ENCODE measurements at regions of chr14 and their contacts with region 1.

Region 1: GRCh38 chr14:75165586-75166391 is 10.6 kb downstream of the TMED10 start:
- DNase-seq: peak; percentile 20 to 89 (median 77)
- H3K4me3 ChIP-seq: peak overlapping the region in 33 of 59 donors; percentile 0 to 49 (median 19)
- H3K27ac ChIP-seq: peak overlapping the region; percentile 42 to 99 (median 93)
- H3K27me3 ChIP-seq: no peaks in the 10 kb centered on the region
- CTCF ChIP-seq: peak in 1 of 56 donors; percentile 14

Region 2: DNA sequence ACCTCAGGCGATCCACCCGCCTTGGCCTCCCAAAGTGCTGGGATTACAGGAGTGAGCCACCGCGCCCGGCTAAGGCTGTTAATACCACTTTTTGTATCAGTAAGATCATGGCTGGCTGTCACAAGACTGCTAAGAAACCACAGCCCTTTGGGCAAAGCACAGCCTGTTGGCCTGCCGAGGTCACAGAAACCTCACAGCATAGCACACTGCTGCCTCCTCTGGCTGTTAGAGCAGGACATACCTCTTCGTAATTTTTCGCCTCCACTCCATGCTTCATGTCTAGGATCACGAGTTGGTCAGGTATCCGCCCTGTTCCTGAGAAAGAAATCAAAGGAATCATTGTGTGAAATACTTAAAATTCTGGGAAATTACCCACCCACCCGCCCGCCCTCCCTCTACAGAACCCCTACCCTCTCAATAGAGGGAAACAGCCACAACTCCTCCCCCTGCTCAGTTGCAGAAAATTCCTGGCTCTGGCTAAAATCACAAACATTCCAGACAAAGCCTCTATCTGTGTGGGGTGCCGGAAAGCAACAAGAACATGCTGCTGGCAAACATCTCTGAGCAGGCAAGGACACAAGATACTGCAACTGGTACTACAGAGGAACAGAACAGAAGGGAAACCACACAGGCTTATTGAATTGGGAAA is 18.2 kb before region 1 on chr14:
- intact Hi-C with region 1: loop called (anchors 1 kb)
- DNase-seq: peak in 9 of 10 donors; percentile 56 to 90 (median 78)
- H3K4me3 ChIP-seq: peak overlapping the region in 47 of 59 donors; percentile 3 to 54 (median 26)
- H3K27ac ChIP-seq: peak overlapping the region; percentile 90 to 100 (median 99)
- H3K27me3 ChIP-seq: no peaks in the 10 kb centered on the region
- CTCF ChIP-seq: peak in 55 of 56 donors; percentile 16 to 70 (median 57)

Measured in dorsolateral prefrontal cortex (tissue), 120 donors.